ENCODE measurements at regions of chr1 and their contacts with region 1.

Region 1: DNA sequence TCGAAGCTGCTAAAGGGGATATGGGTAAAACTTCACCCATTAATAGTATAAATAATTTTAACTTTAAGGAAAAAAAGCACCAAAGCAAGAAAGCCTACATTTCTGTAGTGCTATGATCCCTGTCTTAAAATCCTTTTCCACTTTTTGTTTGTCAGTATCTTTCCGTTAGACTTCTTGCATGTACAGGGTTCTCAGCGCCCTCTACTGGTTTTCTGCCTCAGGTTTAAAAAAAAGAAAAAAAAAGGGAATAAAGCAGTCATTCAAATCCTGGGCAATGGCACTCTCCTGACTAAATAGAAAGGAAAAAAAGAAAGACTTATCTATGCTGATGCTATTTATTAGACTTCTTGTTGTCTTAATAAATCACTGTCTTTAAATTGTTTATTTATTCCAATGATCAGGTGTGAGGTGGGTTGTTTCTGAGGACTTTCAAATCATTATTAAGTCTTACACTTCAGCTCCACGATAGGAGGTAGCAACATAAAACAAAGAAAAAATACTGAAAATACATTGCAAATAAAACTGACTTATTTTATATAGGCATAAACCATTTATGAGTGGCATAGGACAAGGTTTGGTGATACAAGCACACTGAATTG is 475.4 kb upstream of the NR5A2 start:
- DNase-seq: no peak
- H3K4me3 ChIP-seq: no peak overlapping the region
- H3K27ac ChIP-seq: no peak overlapping the region
- H3K4me1 ChIP-seq: no peaks in the 10 kb centered on the region
- H3K27me3 ChIP-seq: no peaks in the 10 kb centered on the region
- CTCF ChIP-seq: peak; percentile 40 to 64 (median 48)
- EP300 ChIP-seq: no peak
- POLR2A ChIP-seq: no peak

Region 2: DNA sequence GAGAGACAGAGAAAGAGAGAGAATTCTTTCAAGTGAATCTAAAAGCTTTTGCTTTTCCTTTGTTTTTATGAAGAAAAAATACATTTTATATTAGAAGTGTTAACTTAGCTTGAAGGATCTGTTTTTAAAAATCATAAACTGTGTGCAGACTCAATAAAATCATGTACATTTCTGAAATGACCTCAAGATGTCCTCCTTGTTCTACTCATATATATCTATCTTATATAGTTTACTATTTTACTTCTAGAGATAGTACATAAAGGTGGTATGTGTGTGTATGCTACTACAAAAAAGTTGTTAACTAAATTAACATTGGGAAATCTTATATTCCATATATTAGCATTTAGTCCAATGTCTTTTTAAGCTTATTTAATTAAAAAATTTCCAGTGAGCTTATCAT is 795.6 kb before region 1 on chr1:
- intact Hi-C with region 1: loop called (anchors 5 kb)
- DNase-seq: no peak
- H3K4me3 ChIP-seq: no peak overlapping the region
- H3K27ac ChIP-seq: no peak overlapping the region
- H3K4me1 ChIP-seq: no peaks in the 10 kb centered on the region
- H3K27me3 ChIP-seq: no peaks in the 10 kb centered on the region
- CTCF ChIP-seq: peak in 2 of 3 experiments; percentile 13 to 38
- EP300 ChIP-seq: no peak
- POLR2A ChIP-seq: no peak

Region 3: DNA sequence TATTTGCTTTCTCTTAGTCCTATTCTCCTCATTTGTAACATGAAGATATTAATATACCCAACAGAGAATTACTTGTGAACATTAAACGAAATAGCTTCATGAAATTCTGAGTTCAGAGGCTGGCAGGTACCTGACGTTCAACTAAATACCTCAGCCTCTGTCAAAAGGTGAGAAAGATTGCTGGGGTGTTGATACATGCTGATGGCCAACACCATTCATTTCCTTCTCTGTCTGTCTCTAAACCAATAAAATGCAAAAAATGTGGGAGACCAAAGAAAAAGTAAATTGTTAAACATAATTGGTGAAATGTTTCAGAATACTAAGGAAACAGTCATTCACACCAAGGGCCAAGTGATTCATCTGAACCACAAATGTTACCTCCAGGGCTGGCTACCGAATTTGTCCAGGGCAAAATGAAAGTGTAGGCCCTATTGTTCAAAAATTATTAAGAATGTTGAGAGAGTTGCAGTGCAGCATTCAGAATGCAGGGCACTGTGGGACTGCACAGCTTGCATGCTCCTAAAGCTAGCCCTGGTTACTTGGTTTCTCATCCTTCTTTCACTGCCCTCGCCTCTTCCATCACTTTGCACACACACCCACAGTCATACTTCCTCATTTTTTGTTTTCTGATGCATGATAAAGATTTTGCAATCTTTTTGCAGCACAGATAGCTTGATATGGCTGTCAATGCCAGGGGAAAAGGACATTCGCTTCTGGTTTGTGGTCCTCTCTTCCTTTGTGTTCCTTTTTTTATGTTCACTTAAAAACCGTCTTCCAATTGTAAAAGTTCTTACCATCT is 61.1 kb after region 1 on chr1:
- intact Hi-C with region 1: no loop called
- DNase-seq: no peak
- H3K4me3 ChIP-seq: no peak overlapping the region
- H3K27ac ChIP-seq: no peak overlapping the region
- H3K4me1 ChIP-seq: no peaks in the 10 kb centered on the region
- H3K27me3 ChIP-seq: no peaks in the 10 kb centered on the region
- CTCF ChIP-seq: no peak
- EP300 ChIP-seq: no peak
- POLR2A ChIP-seq: no peak

Measured in esophagus muscularis mucosa (tissue), 4 donors.